ENCODE measurements at regions of chr5 and their contacts with region 1.

Region 1: GRCh38 chr5:179907570-179908324 is at the start of gene TBC1D9B:
- DNase-seq: peak; percentile 37 to 90 (median 67)
- ATAC-seq: peak; percentile 90
- H3K4me3 ChIP-seq: peak within 1 kb of the TSS; percentile 52 to 57
- H3K4me3 Mint-ChIP-seq: peak within 1 kb of the TSS; percentile 86
- H3K27ac ChIP-seq: peak within 1 kb of the TSS in 1 of 2 experiments; percentile 54
- H3K27ac Mint-ChIP-seq: peak within 1 kb of the TSS; percentile 79
- H3K4me1 ChIP-seq: peaks cover 17% of the 10 kb centered on the region
- H3K4me1 Mint-ChIP-seq: peaks cover 15% of the 10 kb centered on the region
- H3K27me3 ChIP-seq: no peaks in the 10 kb centered on the region
- H3K27me3 Mint-ChIP-seq: no peaks in the 10 kb centered on the region
- CTCF ChIP-seq: peak; percentile 14
- total RNA-seq, gene TBC1D9B: 39.7 to 48.1 TPM

Region 2: GRCh38 chr5:178551059-178551458 is 1356.7 kb before region 1 on chr5:
- CTCF ChIA-PET with region 1: no interaction called
- POLR2A ChIA-PET with region 1: no interaction called
- intact Hi-C with region 1: no loop called
- DNase-seq: peak in 1 of 9 experiments; percentile 19
- ATAC-seq: no peak
- H3K4me3 ChIP-seq: no peak overlapping the region
- H3K4me3 Mint-ChIP-seq: no peak overlapping the region
- H3K27ac ChIP-seq: no peak overlapping the region
- H3K27ac Mint-ChIP-seq: no peak overlapping the region
- H3K4me1 ChIP-seq: no peaks in the 10 kb centered on the region
- H3K4me1 Mint-ChIP-seq: no peaks in the 10 kb centered on the region
- H3K27me3 ChIP-seq: no peaks in the 10 kb centered on the region
- H3K27me3 Mint-ChIP-seq: peaks cover 10% of the 10 kb centered on the region
- CTCF ChIP-seq: peak; percentile 29

Region 3: GRCh38 chr5:179678223-179679013 is 229.3 kb before region 1 on chr5:
- CTCF ChIA-PET with region 1: no interaction called
- POLR2A ChIA-PET with region 1: no interaction called
- intact Hi-C with region 1: loop called in 1 of 2 experiments (anchors 10 kb)
- DNase-seq: peak; percentile 85 to 98 (median 92)
- ATAC-seq: peak; percentile 85
- H3K4me3 ChIP-seq: peak overlapping the region; percentile 66 to 98
- H3K4me3 Mint-ChIP-seq: peak overlapping the region; percentile 98
- H3K27ac ChIP-seq: peak overlapping the region; percentile 83 to 91
- H3K27ac Mint-ChIP-seq: peak overlapping the region; percentile 99
- H3K4me1 ChIP-seq: peaks cover 22% of the 10 kb centered on the region
- H3K4me1 Mint-ChIP-seq: peaks cover 37% of the 10 kb centered on the region
- H3K27me3 ChIP-seq: no peaks in the 10 kb centered on the region
- H3K27me3 Mint-ChIP-seq: no peaks in the 10 kb centered on the region
- CTCF ChIP-seq: no peak

Region 4: GRCh38 chr5:179697993-179698934 is 209.5 kb before region 1 on chr5:
- CTCF ChIA-PET with region 1: no interaction called
- POLR2A ChIA-PET with region 1: no interaction called
- intact Hi-C with region 1: loop called in 1 of 2 experiments (anchors 1 kb)
- DNase-seq: peak; percentile 97 to 100 (median 98)
- ATAC-seq: peak; percentile 87
- H3K4me3 ChIP-seq: peak overlapping the region; percentile 84 to 89
- H3K4me3 Mint-ChIP-seq: peak overlapping the region; percentile 99
- H3K27ac ChIP-seq: peak overlapping the region; percentile 92 to 94
- H3K27ac Mint-ChIP-seq: peak overlapping the region; percentile 100
- H3K4me1 ChIP-seq: peaks cover 32% of the 10 kb centered on the region
- H3K4me1 Mint-ChIP-seq: peaks cover 40% of the 10 kb centered on the region
- H3K27me3 ChIP-seq: no peaks in the 10 kb centered on the region
- H3K27me3 Mint-ChIP-seq: no peaks in the 10 kb centered on the region
- CTCF ChIP-seq: no peak

Region 5: DNA sequence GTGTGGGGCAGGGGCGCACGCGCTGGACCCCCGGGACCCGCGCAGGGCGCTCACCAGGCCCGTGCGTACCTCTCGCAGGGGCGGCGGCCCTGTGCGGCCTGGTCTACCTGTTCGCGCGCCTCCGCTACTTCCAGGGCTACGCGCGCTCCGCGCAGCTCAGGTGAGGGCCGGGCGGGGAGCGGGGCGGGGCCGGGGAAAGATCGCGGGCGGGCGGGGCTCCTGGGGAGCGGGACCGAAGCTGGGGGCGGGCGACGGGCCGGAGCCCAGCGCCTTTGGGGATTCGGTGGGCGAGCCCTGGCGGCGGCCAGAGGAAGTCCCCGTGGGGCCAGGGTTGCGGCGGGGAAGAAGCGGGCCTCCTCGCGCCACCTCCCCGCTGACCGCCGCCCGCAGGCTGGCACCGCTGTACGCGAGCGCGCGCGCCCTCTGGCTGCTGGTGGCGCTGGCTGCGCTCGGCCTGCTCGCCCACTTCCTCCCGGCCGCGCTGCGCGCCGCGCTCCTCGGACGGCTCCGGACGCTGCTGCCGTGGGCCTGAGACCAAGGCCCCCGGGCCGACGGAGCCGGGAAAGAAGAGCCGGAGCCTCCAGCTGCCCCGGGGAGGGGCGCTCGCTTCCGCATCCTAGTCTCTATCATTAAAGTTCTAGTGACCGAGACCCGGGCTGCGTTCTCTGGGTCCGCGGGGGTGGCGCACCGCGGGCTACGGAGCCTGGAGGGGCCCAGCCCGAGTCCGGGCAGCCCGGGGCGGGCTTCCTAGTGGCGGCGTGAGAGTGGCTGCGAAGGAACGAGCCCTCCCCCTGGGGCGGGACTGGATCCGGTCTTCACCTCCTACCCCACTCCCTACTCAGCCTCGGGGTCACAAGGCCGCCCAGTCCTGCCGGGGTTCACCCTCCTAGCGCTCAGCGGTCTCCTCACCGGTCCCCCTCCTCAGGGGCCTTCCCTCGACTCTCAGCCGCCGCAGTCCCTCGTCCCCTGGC is 111.6 kb before region 1 on chr5:
- CTCF ChIA-PET with region 1: interaction called, 11 read pairs
- POLR2A ChIA-PET with region 1: no interaction called
- intact Hi-C with region 1: no loop called
- DNase-seq: peak; percentile 43 to 86 (median 66)
- ATAC-seq: peak; percentile 64
- H3K4me3 ChIP-seq: peak overlapping the region; percentile 36 to 50
- H3K4me3 Mint-ChIP-seq: peak overlapping the region; percentile 75
- H3K27ac ChIP-seq: peak overlapping the region; percentile 23 to 31
- H3K27ac Mint-ChIP-seq: peak overlapping the region; percentile 37
- H3K4me1 ChIP-seq: peaks cover 33% of the 10 kb centered on the region
- H3K4me1 Mint-ChIP-seq: peaks cover 29% of the 10 kb centered on the region
- H3K27me3 ChIP-seq: no peaks in the 10 kb centered on the region
- H3K27me3 Mint-ChIP-seq: no peaks in the 10 kb centered on the region
- CTCF ChIP-seq: peak; percentile 67

Region 6: DNA sequence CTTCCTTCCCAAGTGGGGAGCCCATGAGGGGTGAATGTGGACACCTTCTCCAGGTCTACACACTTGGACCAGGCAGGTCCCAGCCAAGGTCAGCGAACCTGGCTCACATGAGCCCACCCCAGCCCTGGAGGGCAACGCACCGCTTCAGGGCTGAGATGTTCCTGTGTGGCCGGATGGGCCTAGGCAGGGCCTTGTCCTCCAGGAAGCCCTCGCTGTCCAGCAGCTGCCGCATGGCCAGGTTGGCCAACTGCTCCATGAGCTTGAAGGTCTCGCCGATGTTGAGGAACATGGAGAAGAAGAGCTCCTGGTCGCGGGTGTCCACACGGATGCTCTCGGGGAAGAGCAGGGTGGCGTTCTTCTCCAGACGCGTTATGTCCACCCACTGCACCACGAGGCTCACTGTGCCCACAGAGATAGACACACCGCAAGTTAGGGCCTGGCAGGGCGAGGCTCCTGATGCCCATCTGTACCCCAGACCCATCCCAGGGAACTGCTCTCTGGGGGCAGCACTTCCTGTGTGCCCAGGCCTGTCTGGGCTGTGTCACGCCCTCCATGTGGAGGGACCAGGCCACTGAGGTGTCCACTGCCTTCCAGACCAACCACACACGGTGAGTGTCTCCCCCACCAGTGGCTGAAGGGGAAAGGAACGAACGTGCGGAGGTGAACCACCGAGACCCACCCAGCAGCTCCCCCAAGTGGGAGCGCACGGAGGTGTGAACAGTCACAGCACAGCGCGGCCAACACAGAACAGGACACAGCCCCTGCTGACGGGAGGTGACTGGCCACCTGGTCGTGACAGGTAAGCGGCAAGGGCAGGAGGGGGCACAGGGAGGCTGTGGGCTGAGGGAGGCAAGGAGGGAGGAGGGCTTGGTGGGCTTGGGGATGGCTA is 14.4 kb before region 1 on chr5:
- CTCF ChIA-PET with region 1: no interaction called
- POLR2A ChIA-PET with region 1: no interaction called
- intact Hi-C with region 1: no loop called
- DNase-seq: no peak
- ATAC-seq: no peak
- H3K4me3 ChIP-seq: no peak overlapping the region
- H3K4me3 Mint-ChIP-seq: no peak overlapping the region
- H3K27ac ChIP-seq: no peak overlapping the region
- H3K27ac Mint-ChIP-seq: no peak overlapping the region
- H3K4me1 ChIP-seq: no peaks in the 10 kb centered on the region
- H3K4me1 Mint-ChIP-seq: no peaks in the 10 kb centered on the region
- H3K27me3 ChIP-seq: no peaks in the 10 kb centered on the region
- H3K27me3 Mint-ChIP-seq: no peaks in the 10 kb centered on the region
- CTCF ChIP-seq: no peak

Region 7: GRCh38 chr5:180090098-180090768 is 182.5 kb after region 1 on chr5:
- CTCF ChIA-PET with region 1: no interaction called
- POLR2A ChIA-PET with region 1: no interaction called
- intact Hi-C with region 1: loop called in 1 of 2 experiments (anchors 1 kb)
- DNase-seq: peak; percentile 62 to 90 (median 81)
- ATAC-seq: peak; percentile 71
- H3K4me3 ChIP-seq: peak overlapping the region; percentile 57
- H3K4me3 Mint-ChIP-seq: peak overlapping the region; percentile 86
- H3K27ac ChIP-seq: peak overlapping the region in 1 of 2 experiments; percentile 42
- H3K27ac Mint-ChIP-seq: peak overlapping the region; percentile 88
- H3K4me1 ChIP-seq: peaks cover 16% of the 10 kb centered on the region
- H3K4me1 Mint-ChIP-seq: peaks cover 27% of the 10 kb centered on the region
- H3K27me3 ChIP-seq: no peaks in the 10 kb centered on the region
- H3K27me3 Mint-ChIP-seq: peaks cover 4% of the 10 kb centered on the region
- CTCF ChIP-seq: peak; percentile 68